ENCODE measurements at regions of chr10 and their contacts with region 1.

Region 1: GRCh38 chr10:60444494-60445064 is 54.9 kb upstream of the ANK3 start:
- DNase-seq: peak in 3 of 14 experiments; percentile 12 to 21 (median 13)
- ATAC-seq: no peak
- H3K4me3 ChIP-seq: no peak overlapping the region
- H3K4me3 Mint-ChIP-seq: no peak overlapping the region
- H3K27ac ChIP-seq: no peak overlapping the region
- H3K27ac Mint-ChIP-seq: no peak overlapping the region
- H3K4me1 ChIP-seq: peaks cover 2% of the 10 kb centered on the region
- H3K4me1 Mint-ChIP-seq: peaks cover 23% of the 10 kb centered on the region
- H3K27me3 ChIP-seq: no peaks in the 10 kb centered on the region
- H3K27me3 Mint-ChIP-seq: no peaks in the 10 kb centered on the region
- CTCF ChIP-seq: peak; percentile 33

Region 2: GRCh38 chr10:60646966-60647796 is 202.6 kb after region 1 on chr10:
- CTCF ChIA-PET with region 1: no interaction called
- POLR2A ChIA-PET with region 1: no interaction called
- intact Hi-C with region 1: loop called (anchors 5 to 10 kb)
- DNase-seq: peak in 9 of 14 experiments; percentile 8 to 78 (median 33)
- ATAC-seq: peak; percentile 40
- H3K4me3 ChIP-seq: no peak overlapping the region
- H3K4me3 Mint-ChIP-seq: no peak overlapping the region
- H3K27ac ChIP-seq: no peak overlapping the region
- H3K27ac Mint-ChIP-seq: peak overlapping the region; percentile 5
- H3K4me1 ChIP-seq: peaks cover 6% of the 10 kb centered on the region
- H3K4me1 Mint-ChIP-seq: peaks cover 66% of the 10 kb centered on the region
- H3K27me3 ChIP-seq: no peaks in the 10 kb centered on the region
- H3K27me3 Mint-ChIP-seq: no peaks in the 10 kb centered on the region
- CTCF ChIP-seq: peak; percentile 91

Measured in CD4-positive, alpha-beta T cell (primary cell).